Activated CD8-positive, alpha-beta memory T cell treated with anti-CD3 and anti-CD28 coated beads, Interleukin-2, amount 10 ng/mL, durations not matched to agents 7 days and 5 days (primary cell): ENCODE measurements at regions of chr3 and their contacts with region 1.

Region 1: GRCh38 chr3:69120879-69121464 is 1.4 kb downstream of the LMOD3 start:
- DNase-seq: peak; percentile 90
- ATAC-seq: peak; percentile 87
- H3K4me3 Mint-ChIP-seq: no peak overlapping the region
- H3K27ac Mint-ChIP-seq: peak overlapping the region; percentile 7
- H3K4me1 Mint-ChIP-seq: peaks cover 2% of the 10 kb centered on the region
- H3K27me3 Mint-ChIP-seq: no peaks in the 10 kb centered on the region

Region 2: GRCh38 chr3:69092030-69092516 is 28.9 kb before region 1 on chr3:
- CTCF ChIA-PET with region 1: interaction called, 12 read pairs
- DNase-seq: peak; percentile 68
- ATAC-seq: peak; percentile 74
- H3K4me3 Mint-ChIP-seq: peak overlapping the region; percentile 68
- H3K27ac Mint-ChIP-seq: peak overlapping the region; percentile 93
- H3K4me1 Mint-ChIP-seq: peaks cover 84% of the 10 kb centered on the region
- H3K27me3 Mint-ChIP-seq: no peaks in the 10 kb centered on the region

Region 3: GRCh38 chr3:69108811-69109210 is 12.2 kb before region 1 on chr3:
- CTCF ChIA-PET with region 1: interaction called, 17 read pairs
- DNase-seq: no peak
- ATAC-seq: no peak
- H3K4me3 Mint-ChIP-seq: no peak overlapping the region
- H3K27ac Mint-ChIP-seq: no peak overlapping the region
- H3K4me1 Mint-ChIP-seq: peaks cover 13% of the 10 kb centered on the region
- H3K27me3 Mint-ChIP-seq: no peaks in the 10 kb centered on the region

Region 4: DNA sequence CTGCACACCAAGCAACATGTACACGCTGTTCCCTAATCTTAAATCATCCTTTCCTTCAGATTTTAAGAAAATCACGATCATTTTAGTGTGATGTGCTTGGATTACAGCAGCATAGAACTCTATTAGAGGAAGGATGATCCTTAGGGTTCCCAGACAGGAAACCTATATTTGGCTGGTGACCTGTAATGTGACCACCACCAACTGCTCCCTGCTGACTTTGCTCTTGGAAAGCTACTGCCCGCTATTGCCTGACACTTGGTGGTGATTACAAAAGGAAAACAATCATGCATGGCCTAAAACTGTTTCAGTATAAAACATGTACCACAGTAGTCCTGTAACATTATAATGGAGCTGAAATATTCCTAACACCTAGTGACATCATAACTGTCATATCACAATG is 28.6 kb after region 1 on chr3:
- CTCF ChIA-PET with region 1: no interaction called
- DNase-seq: no peak
- ATAC-seq: no peak
- H3K4me3 Mint-ChIP-seq: no peak overlapping the region
- H3K27ac Mint-ChIP-seq: no peak overlapping the region
- H3K4me1 Mint-ChIP-seq: no peaks in the 10 kb centered on the region
- H3K27me3 Mint-ChIP-seq: peaks cover 7% of the 10 kb centered on the region

Region 5: DNA sequence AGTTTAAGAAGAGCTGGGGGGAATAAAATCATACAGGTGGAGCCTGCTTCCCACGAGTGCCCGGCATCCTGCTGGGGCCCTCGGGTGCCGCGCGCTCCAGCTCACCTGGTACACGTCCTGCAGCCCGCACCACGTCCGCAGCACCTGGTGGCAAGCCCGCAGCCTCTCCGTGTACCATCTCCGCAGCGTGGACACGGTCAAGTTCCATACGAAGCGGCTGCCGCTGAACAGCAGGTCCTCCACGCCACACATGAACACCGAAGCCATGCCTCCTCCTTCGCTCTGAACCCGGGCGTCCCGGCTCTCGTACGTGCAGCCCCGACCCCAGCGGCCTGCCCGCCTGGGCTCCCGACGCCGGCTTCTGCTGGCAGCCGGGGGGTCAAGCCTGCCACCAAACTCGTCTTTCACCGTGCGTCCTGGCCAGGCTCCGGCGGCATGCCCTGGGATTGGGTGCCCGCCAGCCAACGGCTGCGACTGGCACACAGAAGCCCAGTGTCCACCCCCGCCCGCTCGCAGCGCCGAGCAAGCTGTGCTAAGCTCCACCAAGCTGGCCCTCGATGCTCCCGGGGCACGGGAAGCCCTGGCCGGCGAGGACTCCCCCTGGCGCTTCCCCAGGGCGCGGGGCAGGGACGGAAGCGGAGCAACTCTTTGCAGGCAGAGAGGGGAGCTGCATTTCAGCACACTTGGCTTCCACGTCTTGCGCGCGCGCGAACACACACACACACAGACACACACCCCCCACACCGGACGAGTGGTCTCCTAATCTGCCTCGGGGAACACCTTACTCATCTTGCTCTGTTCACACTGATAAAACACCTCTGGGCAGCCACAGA is 265.0 kb after region 1 on chr3 and contains the start of gene FRMD4B:
- CTCF ChIA-PET with region 1: interaction called, 10 read pairs
- DNase-seq: peak; percentile 49
- ATAC-seq: peak; percentile 70
- H3K4me3 Mint-ChIP-seq: peak within 1 kb of the TSS; percentile 43
- H3K27ac Mint-ChIP-seq: no peak within 1 kb of the TSS
- H3K4me1 Mint-ChIP-seq: peaks cover 11% of the 10 kb centered on the region
- H3K27me3 Mint-ChIP-seq: peaks cover 81% of the 10 kb centered on the region
- total RNA-seq, gene FRMD4B: 55.8 to 68.2 TPM

Region 6: GRCh38 chr3:69410250-69410649 is 289.3 kb after region 1 on chr3:
- CTCF ChIA-PET with region 1: interaction called, 22 read pairs
- DNase-seq: peak; percentile 80
- ATAC-seq: peak; percentile 94
- H3K4me3 Mint-ChIP-seq: no peak overlapping the region
- H3K27ac Mint-ChIP-seq: no peak overlapping the region
- H3K4me1 Mint-ChIP-seq: peaks cover 2% of the 10 kb centered on the region
- H3K27me3 Mint-ChIP-seq: peaks cover 5% of the 10 kb centered on the region